Heart right ventricle (tissue), 16 donors: ENCODE measurements at regions of chr10 and their contacts with region 1.

Region 1: DNA sequence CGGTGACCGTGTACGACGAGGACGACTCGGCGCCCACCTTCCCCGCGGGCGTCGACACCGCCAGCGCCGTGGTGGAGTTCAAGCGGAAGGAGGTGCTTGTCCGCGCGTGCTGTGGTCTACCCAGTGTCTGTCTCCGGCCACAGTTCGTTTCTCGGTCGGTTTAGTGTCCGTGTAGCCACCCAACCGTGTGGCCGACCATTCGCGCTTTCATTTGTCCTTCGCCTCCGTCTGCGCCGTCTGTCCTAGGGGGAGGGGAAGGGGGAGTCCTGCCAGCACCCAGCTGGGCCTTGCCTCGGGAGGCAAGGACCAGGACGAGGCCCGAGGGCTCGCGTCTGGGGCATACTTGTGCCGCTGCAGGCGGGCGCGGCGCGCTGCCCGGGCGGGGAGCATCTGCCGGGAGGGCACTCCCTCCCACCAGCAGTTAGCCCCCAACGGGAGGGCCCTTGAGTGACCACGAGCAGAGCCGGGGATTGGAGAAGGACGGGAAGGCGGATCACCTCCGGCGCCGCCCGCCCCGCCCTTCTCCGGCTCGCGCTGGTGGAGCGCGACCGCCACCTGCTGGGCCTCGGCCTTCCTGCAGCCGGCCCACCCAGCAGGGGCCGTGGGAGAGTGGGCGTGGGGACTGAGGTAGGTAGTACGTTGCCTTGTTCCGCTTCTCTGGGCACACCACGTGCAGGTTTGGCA is 28.4 kb downstream of the RET start:
- DNase-seq: peak; percentile 60 to 80
- ATAC-seq: peak; percentile 92 to 96 (median 94)
- H3K4me3 ChIP-seq: peak overlapping the region; percentile 2 to 71 (median 58)
- H3K27ac ChIP-seq: no peak overlapping the region
- H3K4me1 ChIP-seq: peaks cover 0 to 18% (median 13%) of the 10 kb centered on the region in 9 donors
- H3K27me3 ChIP-seq: peaks cover 0 to 41% (median 33%) of the 10 kb centered on the region in 7 donors
- CTCF ChIP-seq: peak; percentile 98 to 100 (median 100)

Region 2: DNA sequence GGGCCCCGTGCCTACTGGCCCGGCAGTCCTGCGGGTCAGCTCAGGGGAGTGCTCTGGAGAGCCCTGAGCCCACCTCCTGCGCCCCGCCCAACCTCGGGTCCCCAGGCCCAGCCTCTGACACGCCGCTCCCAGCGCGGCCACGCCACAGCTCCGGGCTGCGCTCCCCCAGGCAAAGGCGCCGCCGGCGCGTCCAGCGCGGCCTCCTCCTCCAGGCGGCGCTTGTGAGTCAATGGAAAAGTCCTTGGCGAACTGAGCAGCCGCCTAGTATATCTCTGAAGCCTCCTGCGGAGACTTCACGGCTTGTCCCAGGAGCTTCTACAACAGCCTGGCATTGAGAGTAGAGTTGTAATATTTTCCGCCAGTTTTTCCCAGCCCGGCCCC is 352.1 kb before region 1 on chr10:
- intact Hi-C with region 1: loop called in 9 of 10 experiments (anchors 5 to 10 kb)
- DNase-seq: peak; percentile 78 to 83
- ATAC-seq: peak; percentile 89 to 95 (median 92)
- H3K4me3 ChIP-seq: peak overlapping the region; percentile 39 to 65 (median 58)
- H3K27ac ChIP-seq: no peak overlapping the region
- H3K4me1 ChIP-seq: peaks cover 5 to 37% (median 24%) of the 10 kb centered on the region in 9 donors
- H3K27me3 ChIP-seq: peaks cover 7 to 84% (median 82%) of the 10 kb centered on the region in 7 donors
- CTCF ChIP-seq: peak; percentile 61 to 92 (median 86)

Region 3: DNA sequence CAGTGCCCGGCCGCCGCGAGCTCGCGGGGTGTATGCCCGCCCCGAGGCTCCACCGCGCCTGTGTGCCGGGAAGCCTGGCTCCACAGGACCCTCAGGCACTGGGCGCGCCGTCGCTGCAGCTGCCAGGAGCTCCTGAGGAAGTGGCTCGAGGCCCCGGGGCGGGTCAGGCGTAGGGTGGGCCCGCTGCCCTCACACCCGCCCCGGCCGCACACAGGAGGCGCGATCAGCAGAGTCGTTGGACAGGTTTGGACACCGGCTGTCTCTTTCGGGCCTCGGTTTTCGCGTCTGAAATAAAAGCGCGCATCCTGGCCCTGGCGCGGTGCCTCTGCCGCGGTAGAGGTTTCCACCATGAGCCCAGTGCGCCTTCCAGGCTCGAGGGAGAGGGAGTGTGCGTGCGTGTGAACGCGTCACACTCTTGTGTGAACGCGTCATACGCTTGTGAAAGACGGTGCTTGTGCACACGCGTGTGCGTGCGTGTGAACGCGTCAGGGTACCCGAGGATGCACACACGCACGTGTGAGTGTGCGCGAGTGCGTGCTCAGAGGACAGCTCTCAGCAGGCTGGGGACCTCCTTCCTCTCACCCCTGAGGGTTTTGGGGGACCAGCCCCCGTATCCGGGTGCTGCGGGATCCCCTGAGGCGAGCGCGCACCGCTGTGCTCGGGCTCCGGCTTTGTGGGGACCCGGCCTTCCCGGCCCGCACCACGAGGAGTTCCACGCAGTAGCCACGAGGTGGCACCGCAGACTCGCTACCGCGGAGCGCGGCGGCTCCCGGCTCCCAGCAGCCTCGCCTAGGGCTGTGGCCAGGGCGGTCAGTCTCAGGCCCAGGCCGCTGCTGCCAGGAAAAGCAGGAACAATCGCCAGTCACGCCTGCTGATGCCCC is 238.9 kb before region 1 on chr10:
- intact Hi-C with region 1: loop called (anchors 1 to 5 kb)
- DNase-seq: peak; percentile 75 to 87
- ATAC-seq: peak; percentile 99 to 100 (median 100)
- H3K4me3 ChIP-seq: peak overlapping the region in 9 of 10 donors; percentile 3 to 42 (median 29)
- H3K27ac ChIP-seq: no peak overlapping the region
- H3K4me1 ChIP-seq: peaks cover 2 to 19% (median 15%) of the 10 kb centered on the region in 9 donors
- H3K27me3 ChIP-seq: peaks cover 0 to 52% (median 44%) of the 10 kb centered on the region in 7 donors
- CTCF ChIP-seq: peak; percentile 65 to 88 (median 77)

Region 4: DNA sequence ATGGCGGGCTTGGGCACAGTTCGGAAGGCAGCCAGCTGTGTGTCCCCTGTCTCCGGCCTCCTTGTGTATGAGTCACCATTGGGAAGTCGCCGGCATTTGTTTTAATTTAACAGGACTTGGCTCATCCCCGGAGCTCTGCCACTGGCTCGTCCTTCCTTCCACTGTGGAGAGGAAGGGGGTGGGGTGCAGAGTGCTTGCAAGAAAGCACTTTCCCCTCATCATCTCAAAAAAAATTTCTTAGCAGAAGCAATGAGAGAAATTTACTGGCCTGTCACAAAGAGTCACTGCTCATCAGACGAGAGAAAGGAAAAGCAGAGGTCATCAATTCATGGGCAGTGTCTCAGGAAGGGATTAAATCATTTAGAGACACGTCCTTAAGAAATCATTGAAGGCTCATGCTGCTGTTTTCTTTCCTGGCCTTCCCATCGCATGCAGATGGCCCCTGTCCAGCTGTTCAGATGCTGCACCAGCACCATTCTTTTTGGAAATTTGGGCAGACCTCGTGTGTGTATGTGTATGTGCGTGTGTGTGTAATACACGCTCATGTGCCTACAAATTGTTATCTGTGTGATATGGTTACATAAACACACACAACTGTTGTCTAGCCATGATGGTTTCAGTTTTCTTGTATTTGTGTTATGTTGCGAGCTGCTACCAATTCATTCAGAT is 229.3 kb before region 1 on chr10:
- intact Hi-C with region 1: loop called in 1 of 10 experiments (anchors 2 kb)
- DNase-seq: no peak
- ATAC-seq: peak in 5 of 8 donors; percentile 28 to 61 (median 38)
- H3K4me3 ChIP-seq: no peak overlapping the region
- H3K27ac ChIP-seq: no peak overlapping the region
- H3K4me1 ChIP-seq: peaks cover 0 to 26% (median 13%) of the 10 kb centered on the region in 9 donors
- H3K27me3 ChIP-seq: peaks cover 0 to 54% (median 24%) of the 10 kb centered on the region in 7 donors
- CTCF ChIP-seq: no peak